Heart right ventricle (tissue), 16 donors: ENCODE measurements at regions of chr1 and their contacts with region 1.

Region 1: DNA sequence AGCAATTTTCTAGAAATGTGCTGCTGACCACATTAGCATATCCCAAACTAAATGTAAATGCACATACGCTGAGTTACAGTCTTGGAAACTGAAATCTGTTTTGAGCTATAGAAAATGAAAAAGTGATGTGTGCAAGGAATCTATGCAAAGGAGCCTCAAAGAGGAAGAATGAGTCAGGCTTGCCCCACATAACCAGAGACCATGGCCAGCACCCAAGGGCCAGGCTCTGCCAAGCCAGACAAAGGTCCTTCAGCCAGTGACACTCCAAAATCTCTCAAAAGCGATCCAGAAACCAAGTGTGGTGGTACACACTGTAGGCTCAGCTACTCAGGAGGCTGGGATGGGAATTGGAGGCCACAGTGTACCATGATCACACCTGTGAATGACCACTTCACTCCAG is 195.2 kb downstream of the TOMM20 start:
- DNase-seq: peak; percentile 57 to 58
- ATAC-seq: peak; percentile 73 to 88 (median 80)
- H3K4me3 ChIP-seq: no peak overlapping the region
- H3K27ac ChIP-seq: peak overlapping the region in 8 of 10 donors; percentile 12 to 78 (median 57)
- H3K4me1 ChIP-seq: peaks cover 4 to 57% (median 16%) of the 10 kb centered on the region in 9 donors
- H3K27me3 ChIP-seq: no peaks in the 10 kb centered on the region
- CTCF ChIP-seq: no peak

Region 2: GRCh38 chr1:234842726-234843641 is 90.5 kb before region 1 on chr1:
- intact Hi-C with region 1: no loop called
- DNase-seq: peak; percentile 34 to 66
- ATAC-seq: peak; percentile 22 to 82 (median 64)
- H3K4me3 ChIP-seq: no peak overlapping the region
- H3K27ac ChIP-seq: peak overlapping the region in 8 of 10 donors; percentile 20 to 85 (median 54)
- H3K4me1 ChIP-seq: peaks cover 7 to 79% (median 31%) of the 10 kb centered on the region in 9 donors
- H3K27me3 ChIP-seq: no peaks in the 10 kb centered on the region
- CTCF ChIP-seq: no peak

Region 3: DNA sequence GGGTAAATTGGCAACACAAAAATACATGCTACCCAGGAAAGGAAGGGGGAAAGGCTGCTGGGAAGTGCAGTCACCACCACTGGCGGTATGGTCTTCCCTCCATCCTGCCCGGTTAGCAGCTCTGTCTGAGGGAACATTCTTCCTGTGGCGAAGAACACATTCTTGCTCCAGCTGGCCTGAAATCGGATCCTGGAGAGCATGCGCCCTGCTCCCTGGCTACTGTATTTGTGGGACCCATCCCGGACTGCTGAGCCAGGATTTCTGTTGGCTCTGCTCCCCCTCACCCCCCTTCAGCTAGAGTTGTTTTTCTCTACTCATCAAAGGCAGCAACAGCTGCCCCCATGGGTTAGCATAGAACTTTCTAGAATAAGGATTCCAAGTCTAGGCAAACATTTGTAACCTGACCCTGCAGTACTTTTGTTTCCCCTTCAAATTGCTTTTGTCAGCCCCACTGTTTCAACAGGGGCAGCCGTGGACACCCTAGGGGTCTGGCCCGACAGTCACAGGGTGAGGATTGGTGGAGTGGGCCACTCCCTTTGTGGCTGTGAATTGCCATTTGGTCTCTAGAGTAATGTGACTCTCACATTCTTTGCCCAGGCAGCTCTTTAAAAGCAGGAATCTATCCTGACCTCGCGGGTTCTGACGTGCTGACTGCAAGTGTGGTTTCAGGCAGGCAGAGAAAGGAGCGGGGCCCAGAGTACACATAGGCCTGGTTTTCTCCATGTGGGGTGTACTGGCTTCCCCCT is 37.4 kb after region 1 on chr1:
- intact Hi-C with region 1: loop called in 1 of 10 experiments (anchors 2 kb)
- DNase-seq: peak; percentile 67 to 75
- ATAC-seq: peak; percentile 64 to 83 (median 76)
- H3K4me3 ChIP-seq: peak overlapping the region in 2 of 10 donors; percentile 44 to 46
- H3K27ac ChIP-seq: peak overlapping the region; percentile 71 to 90 (median 80)
- H3K4me1 ChIP-seq: peaks cover 16 to 62% (median 36%) of the 10 kb centered on the region in 9 donors
- H3K27me3 ChIP-seq: no peaks in the 10 kb centered on the region
- CTCF ChIP-seq: no peak